Left cardiac atrium (tissue), 4 donors: ENCODE measurements at regions of chr4 and their contacts with region 1.

Region 1: DNA sequence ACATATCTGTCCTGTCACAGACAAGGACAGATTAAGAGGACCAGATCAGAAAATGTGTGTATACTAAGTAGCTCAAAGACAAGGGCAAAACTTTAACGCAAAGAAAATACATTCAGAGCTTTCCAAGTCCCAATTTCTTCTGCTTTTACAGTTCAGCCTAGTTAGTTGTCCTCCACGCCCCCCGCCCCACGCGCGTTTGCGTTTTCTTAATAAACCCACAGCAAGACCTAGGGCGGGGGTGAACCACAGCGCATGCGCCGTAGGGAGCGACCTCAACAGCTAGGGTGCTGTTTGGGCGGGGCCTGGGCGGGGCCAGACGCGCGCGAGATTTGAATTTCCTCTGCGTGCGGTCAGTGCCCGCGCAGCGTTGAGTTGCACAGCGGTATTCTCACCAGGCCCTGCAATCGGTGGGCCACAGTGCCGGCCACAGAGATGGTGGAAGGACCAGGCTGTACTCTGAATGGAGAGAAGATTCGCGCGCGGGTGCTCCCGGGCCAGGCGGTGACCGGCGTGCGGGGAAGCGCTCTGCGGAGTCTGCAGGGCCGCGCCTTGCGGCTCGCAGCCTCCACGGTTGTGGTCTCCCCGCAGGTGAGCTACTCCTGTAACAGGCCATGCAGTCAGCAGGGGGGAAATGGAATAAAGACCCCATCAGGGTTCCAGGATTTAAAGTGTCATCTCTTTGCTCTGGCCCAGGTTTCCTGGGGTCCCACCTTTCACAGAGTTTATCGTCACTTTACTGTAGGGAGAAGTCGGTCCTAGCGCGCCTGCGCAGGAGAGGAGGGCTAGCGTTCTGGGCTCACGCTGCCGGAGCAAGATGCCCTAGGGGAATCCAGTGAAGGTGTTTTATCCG is at the start of gene NEIL3:
- DNase-seq: peak; percentile 93
- ATAC-seq: peak; percentile 98
- total RNA-seq, gene NEIL3: 0.32 TPM in 1 of 2 donors, not detected in the other

Region 2: GRCh38 chr4:177376024-177376423 is 66.3 kb after region 1 on chr4:
- intact Hi-C with region 1: no loop called
- DNase-seq: no peak
- ATAC-seq: no peak

Region 3: GRCh38 chr4:177434626-177435025 is 124.9 kb after region 1 on chr4:
- intact Hi-C with region 1: loop called in 1 of 2 experiments (anchors 10 kb)
- DNase-seq: no peak
- ATAC-seq: no peak